ENCODE measurements at regions of chr12 and their contacts with region 1.

Region 1: DNA sequence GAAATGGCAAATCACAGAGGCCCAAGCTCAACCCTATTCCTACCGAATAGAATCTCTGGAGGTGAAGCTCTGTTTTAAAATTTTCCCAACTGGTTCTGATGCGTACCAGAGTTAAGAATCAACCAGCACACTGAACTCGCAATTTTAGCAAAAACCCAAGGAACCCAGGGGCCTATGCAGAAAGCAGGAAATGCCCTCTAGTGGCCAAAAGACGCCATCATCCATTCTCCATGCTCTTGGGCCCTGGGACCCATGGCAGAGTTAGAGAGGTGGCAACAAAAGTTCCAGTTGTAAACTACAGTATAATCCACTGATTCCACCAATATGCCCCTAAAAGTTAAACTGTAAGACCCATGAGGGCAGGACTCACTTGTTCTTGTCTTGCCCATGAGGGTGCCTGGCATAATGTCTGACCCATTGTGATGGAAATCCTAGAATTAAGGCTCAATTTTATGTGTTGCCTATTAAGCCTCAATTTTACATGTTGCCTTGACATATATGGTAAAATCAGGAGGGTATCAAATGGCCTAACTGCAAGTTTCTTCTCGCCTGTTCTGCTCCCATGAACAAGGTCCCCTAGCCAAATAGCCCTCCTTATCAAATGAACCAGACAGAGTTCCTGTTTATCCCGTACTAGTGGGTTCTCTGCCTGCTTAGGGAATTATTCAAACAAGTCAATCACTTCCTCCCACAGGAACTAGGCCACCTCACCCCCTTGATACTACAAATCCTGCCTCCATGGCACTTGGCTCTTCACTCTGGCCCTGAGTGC is 137.5 kb upstream of the CPM start:
- H3K4me3 ChIP-seq: no peak overlapping the region
- H3K27ac ChIP-seq: no peak overlapping the region
- H3K4me1 ChIP-seq: no peaks in the 10 kb centered on the region
- CTCF ChIP-seq: peak; percentile 51

Region 2: DNA sequence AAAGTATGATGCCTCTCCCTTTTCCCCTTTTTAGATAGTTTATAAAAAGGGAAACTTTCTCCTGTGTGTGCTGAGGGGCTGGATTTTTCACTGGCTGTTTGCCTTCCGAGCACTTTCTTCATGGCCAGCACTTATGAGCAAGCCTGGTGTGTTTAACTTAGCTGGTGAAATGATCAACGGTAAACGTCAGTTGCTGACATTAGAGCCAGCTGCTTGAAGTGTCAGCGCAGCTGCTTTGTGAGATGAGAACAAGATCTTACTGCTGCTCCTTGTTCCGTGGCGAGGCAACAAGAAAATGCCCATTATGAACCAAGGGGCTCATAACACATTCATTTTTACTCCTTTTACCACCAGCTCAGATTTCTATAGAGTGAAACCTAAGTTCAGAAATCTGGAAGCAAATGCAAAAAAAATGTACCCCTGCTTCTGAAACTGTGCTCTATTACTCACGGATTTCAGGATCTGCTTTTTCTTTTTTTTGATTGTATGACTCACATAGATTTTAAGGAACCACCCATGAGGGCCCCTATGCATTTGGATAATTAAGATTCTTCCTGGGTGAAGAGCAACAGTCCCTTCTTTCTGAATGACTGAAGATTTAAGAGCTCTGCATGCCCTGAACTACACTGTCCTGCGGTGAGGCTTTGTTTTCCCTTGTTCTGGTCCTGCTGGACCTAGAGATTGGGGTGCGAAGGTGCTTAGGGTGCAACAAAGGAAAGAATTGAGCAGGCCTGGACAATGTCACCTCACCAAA is 63.2 kb before region 1 on chr12:
- CTCF ChIA-PET with region 1: interaction called, 10 read pairs
- POLR2A ChIA-PET with region 1: no interaction called
- H3K4me3 ChIP-seq: no peak overlapping the region
- H3K27ac ChIP-seq: no peak overlapping the region
- H3K4me1 ChIP-seq: peaks cover 14% of the 10 kb centered on the region
- CTCF ChIP-seq: no peak

Region 3: GRCh38 chr12:69059483-69060457 is 10.7 kb before region 1 on chr12:
- CTCF ChIA-PET with region 1: interaction called, 12 read pairs
- POLR2A ChIA-PET with region 1: no interaction called
- H3K4me3 ChIP-seq: no peak overlapping the region
- H3K27ac ChIP-seq: no peak overlapping the region
- H3K4me1 ChIP-seq: no peaks in the 10 kb centered on the region
- CTCF ChIP-seq: no peak